B cell (primary cell): ENCODE measurements at regions of chr13 and their contacts with region 1.

Region 1: DNA sequence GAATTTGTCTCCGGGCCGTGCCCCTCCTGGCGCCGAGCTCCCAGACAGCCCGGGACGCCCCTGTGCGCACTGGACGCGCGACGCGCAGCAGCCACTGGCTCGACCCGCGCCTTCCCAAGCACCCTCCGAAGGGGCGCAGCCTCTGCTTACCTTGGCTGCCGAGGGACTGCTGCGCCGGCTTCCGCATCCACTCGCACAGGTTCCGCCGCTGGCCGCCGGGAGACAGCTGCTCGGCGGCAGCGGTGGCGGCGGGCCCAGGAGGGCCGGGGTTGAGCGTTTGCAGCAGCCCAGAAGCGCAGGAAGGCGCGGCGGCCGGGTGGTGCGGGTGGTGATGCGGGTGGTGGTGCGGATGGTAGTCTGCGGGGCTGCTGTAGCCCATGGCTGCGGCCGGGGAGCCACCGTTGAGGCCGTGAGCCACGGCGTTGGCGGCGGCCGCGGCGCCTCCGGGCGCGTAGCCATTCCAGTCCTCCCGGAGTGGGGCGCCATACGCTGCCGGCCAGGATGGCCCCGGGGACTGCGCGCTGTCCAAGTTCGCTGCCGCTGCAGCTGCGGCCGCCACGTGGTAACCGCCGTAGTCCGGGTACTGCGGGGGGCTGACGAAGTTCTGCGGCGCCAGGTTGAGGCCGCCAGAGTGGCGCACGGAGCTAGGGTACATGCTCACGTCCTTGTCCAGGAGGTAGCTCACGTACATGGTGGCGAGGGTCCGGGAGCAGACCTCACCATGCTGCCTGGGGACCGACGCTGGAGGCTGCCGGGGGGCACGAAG is 616 bp downstream of the CDX2 start:
- DNase-seq: peak; percentile 54
- ATAC-seq: no peak
- H3K4me3 ChIP-seq: peak overlapping the region in 3 of 5 experiments; percentile 25 to 41 (median 27)
- H3K4me3 Mint-ChIP-seq: no peak overlapping the region
- H3K27ac ChIP-seq: no peak overlapping the region
- H3K27ac Mint-ChIP-seq: no peak overlapping the region
- H3K4me1 ChIP-seq: peaks cover 43 to 56% of the 10 kb centered on the region in 2 donors
- H3K4me1 Mint-ChIP-seq: peaks cover 34% of the 10 kb centered on the region
- H3K27me3 ChIP-seq: peaks cover 0 to 88% (median 66%) of the 10 kb centered on the region in 4 experiments
- H3K27me3 Mint-ChIP-seq: peaks cover 77% of the 10 kb centered on the region
- CTCF ChIP-seq: no peak

Region 2: GRCh38 chr13:27953676-27954405 is 14.7 kb before region 1 on chr13:
- CTCF ChIA-PET with region 1: interaction called, 15 read pairs
- POLR2A ChIA-PET with region 1: no interaction called
- intact Hi-C with region 1: no loop called
- DNase-seq: peak; percentile 81
- ATAC-seq: peak; percentile 88
- H3K4me3 ChIP-seq: peak overlapping the region in 4 of 5 experiments; percentile 31 to 53 (median 43)
- H3K4me3 Mint-ChIP-seq: peak overlapping the region; percentile 86
- H3K27ac ChIP-seq: no peak overlapping the region
- H3K27ac Mint-ChIP-seq: no peak overlapping the region
- H3K4me1 ChIP-seq: peaks cover 21 to 25% of the 10 kb centered on the region in 2 donors
- H3K4me1 Mint-ChIP-seq: peaks cover 15% of the 10 kb centered on the region
- H3K27me3 ChIP-seq: peaks cover 0 to 58% (median 44%) of the 10 kb centered on the region in 4 experiments
- H3K27me3 Mint-ChIP-seq: peaks cover 74% of the 10 kb centered on the region
- CTCF ChIP-seq: peak; percentile 86

Region 3: GRCh38 chr13:27997904-27998522 is 29.5 kb after region 1 on chr13:
- CTCF ChIA-PET with region 1: no interaction called
- POLR2A ChIA-PET with region 1: no interaction called
- intact Hi-C with region 1: no loop called
- DNase-seq: peak; percentile 41
- ATAC-seq: peak; percentile 67
- H3K4me3 ChIP-seq: no peak overlapping the region
- H3K4me3 Mint-ChIP-seq: no peak overlapping the region
- H3K27ac ChIP-seq: peak overlapping the region in 1 of 2 donors; percentile 25
- H3K27ac Mint-ChIP-seq: no peak overlapping the region
- H3K4me1 ChIP-seq: no peaks in the 10 kb centered on the region
- H3K4me1 Mint-ChIP-seq: peaks cover 3% of the 10 kb centered on the region
- H3K27me3 ChIP-seq: no peaks in the 10 kb centered on the region
- H3K27me3 Mint-ChIP-seq: no peaks in the 10 kb centered on the region
- CTCF ChIP-seq: peak; percentile 26